Endothelial cell of umbilical vein (primary cell): ENCODE measurements at regions of chr1 and their contacts with region 1.

Region 1: GRCh38 chr1:159197561-159198557 is 6.8 kb upstream of the ACKR1 start:
- DNase-seq: peak; percentile 81
- H3K4me3 ChIP-seq: no peak overlapping the region
- H3K27ac ChIP-seq: no peak overlapping the region
- H3K4me1 ChIP-seq: no peaks in the 10 kb centered on the region
- H3K27me3 ChIP-seq: no peaks in the 10 kb centered on the region
- CTCF ChIP-seq: peak; percentile 85 to 87
- POLR2A ChIP-seq: no peak

Region 2: DNA sequence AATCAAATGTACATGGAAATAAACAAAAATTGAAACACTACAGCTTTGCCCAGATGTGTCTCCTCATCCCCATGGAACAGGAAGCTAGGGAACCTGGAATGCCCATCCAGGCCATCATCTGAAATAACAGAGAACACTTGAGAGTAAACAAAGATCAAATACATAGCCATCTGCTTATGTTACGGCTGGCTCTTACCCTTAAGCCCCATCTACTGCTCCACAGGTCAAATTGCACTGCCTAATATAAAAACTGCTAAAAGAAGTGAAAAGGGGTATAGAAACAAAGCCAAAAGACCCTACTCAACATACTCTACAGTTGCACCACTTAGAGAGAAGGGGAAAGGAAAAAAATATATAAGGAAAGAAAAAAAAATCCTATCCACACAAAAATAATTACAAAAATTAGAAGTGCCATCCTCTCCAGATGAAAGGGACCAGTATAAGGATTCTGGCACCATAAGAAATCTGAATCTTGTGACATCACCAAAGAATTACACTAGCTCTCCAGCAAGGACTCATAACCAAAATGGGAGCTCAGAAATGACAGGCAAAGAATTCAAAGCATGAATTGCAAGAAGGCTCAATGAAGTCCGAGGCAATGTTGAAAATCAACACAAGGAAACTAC is 670.6 kb before region 1 on chr1:
- CTCF ChIA-PET with region 1: no interaction called
- POLR2A ChIA-PET with region 1: no interaction called
- dilution Hi-C with region 1: no loop called
- intact Hi-C with region 1: no loop called
- DNase-seq: peak; percentile 24
- H3K4me3 ChIP-seq: no peak overlapping the region
- H3K27ac ChIP-seq: no peak overlapping the region
- H3K4me1 ChIP-seq: no peaks in the 10 kb centered on the region
- H3K27me3 ChIP-seq: no peaks in the 10 kb centered on the region
- CTCF ChIP-seq: peak in 1 of 2 donors; percentile 37
- POLR2A ChIP-seq: no peak

Region 3: DNA sequence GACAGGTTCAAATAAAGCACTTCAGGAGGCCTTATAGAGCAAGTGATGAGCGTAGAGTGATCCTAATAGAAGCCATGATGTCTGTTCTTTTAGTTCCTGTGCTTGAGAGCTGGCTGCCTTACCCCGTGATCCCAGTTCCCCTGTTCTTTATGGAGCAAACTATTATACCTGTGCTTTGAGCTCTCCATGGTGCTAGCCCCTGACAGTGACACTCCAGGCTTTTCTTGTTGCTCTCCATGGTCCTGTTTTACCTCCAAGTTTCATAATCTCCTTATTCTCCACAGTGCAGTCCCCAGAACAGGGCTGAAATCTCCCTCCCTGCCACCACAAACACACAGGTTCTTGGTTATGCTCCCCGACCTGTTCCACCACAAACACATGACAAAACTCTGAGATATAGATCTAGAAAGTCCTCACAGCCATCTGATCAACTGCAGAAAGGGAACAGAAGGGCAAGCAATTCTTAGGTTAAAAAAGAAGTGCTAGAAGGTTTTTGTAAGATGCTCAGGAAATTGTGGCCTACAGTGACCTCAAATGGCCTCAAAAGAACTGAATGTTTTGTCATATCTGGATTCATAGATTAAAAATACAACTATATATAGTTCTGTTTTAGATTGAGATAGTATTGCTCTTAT is 20.5 kb before region 1 on chr1:
- CTCF ChIA-PET with region 1: interaction called, 13 read pairs
- POLR2A ChIA-PET with region 1: no interaction called
- dilution Hi-C with region 1: no loop called
- intact Hi-C with region 1: no loop called
- DNase-seq: peak; percentile 81
- H3K4me3 ChIP-seq: no peak overlapping the region
- H3K27ac ChIP-seq: no peak overlapping the region
- H3K4me1 ChIP-seq: no peaks in the 10 kb centered on the region
- H3K27me3 ChIP-seq: peaks cover 12 to 19% of the 10 kb centered on the region in 2 experiments
- CTCF ChIP-seq: no peak
- POLR2A ChIP-seq: no peak

Region 4: DNA sequence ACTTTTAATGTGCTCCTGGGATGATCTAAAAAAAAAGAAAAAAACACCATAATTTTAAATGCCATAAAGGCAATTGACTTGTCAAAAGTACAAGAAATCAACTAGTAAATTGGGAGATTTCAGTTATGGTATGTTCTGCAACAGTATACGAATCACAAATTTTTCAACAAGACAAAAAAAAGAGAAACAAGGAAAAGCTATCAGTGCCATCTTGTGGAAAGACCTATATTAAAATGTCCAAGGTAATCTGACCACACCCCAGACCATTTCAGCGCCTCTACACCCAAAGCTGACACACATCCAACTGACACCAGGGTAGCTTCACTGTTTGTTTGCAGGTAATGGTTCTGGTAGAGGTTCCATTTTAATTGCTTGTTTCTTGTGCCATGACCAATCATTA is 577.9 kb after region 1 on chr1:
- CTCF ChIA-PET with region 1: interaction called, 28 read pairs
- POLR2A ChIA-PET with region 1: no interaction called
- dilution Hi-C with region 1: no loop called
- intact Hi-C with region 1: no loop called
- DNase-seq: peak; percentile 46
- H3K4me3 ChIP-seq: no peak overlapping the region
- H3K27ac ChIP-seq: peak overlapping the region; percentile 9
- H3K4me1 ChIP-seq: peaks cover 53% of the 10 kb centered on the region
- H3K27me3 ChIP-seq: no peaks in the 10 kb centered on the region
- CTCF ChIP-seq: no peak
- POLR2A ChIP-seq: peak; percentile 49

Region 5: GRCh38 chr1:159790237-159790917 is 592.5 kb after region 1 on chr1:
- CTCF ChIA-PET with region 1: interaction called, 13 read pairs
- POLR2A ChIA-PET with region 1: no interaction called
- dilution Hi-C with region 1: no loop called
- intact Hi-C with region 1: no loop called
- DNase-seq: peak; percentile 57
- H3K4me3 ChIP-seq: no peak overlapping the region
- H3K27ac ChIP-seq: no peak overlapping the region
- H3K4me1 ChIP-seq: peaks cover 16% of the 10 kb centered on the region
- H3K27me3 ChIP-seq: no peaks in the 10 kb centered on the region
- CTCF ChIP-seq: peak; percentile 61 to 65
- POLR2A ChIP-seq: no peak